ENCODE measurements at regions of chr15 and their contacts with region 1.

Region 1: DNA sequence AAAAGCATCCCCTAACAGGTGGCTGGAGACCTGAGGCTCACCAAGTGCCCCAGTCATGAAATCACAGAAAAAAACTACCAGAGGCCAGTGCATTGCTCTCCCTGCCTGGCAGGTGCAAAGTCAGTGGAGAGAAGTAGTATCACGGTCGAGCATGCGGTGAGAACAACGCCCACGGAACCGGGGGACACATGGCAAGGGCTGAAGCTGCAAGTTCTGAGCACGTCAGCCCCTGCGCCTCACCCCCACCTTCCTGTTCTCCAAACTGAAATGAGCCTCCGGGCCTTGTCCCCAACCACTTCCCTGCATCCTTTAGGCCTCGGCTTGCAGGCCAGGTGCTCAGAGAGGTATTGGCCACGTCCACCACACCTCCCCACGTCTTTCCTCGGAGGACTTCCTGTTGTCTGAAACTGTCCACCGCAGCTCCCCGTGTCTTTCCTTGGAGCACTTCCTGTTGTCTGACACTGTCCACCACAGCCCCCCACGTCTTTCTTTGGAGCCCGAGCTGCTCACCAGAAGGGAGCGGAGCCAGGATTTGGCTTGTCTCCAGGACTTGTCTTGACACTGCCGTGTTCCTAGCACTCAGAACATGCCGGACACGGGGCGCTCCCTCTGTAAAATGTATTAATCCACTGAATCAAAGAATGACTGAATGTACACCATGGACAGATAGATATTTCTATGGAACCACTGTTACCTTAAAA is 43.9 kb downstream of the NSMCE3 start:
- DNase-seq: peak in 1 of 10 donors; percentile 30
- H3K4me3 ChIP-seq: peak overlapping the region in 4 of 59 donors; percentile 9 to 27 (median 15)
- H3K27ac ChIP-seq: no peak overlapping the region
- H3K27me3 ChIP-seq: peaks cover 0 to 13% (median 0%) of the 10 kb centered on the region in 45 donors
- CTCF ChIP-seq: no peak

Region 2: DNA sequence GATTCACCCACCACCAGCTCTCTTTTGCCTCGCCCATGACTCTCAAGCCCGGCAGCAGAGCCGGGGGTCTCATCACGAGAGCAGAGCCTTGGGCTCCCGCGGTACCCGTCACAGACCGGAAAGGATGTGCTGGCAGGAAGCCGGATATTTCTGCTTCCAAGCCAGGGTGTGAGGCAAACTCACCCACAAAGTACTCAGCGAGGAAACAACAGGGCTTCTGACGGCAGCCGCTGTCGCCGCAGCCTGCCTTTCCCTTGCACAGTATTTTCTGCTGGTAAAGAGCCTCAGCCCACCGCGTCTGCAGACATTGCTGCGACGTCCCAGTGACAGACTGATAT is 76.0 kb before region 1 on chr15:
- intact Hi-C with region 1: loop called in 1 of 2 experiments (anchors 10 kb)
- DNase-seq: no peak
- H3K4me3 ChIP-seq: no peak overlapping the region
- H3K27ac ChIP-seq: no peak overlapping the region
- H3K27me3 ChIP-seq: no peaks in the 10 kb centered on the region
- CTCF ChIP-seq: no peak